Transverse colon (tissue), 4 donors: ENCODE measurements at regions of chr11 and their contacts with region 1.

Region 1: GRCh38 chr11:111422494-111423249 is 43.6 kb upstream of the POU2AF1 start:
- DNase-seq: peak; percentile 77
- H3K4me3 ChIP-seq: no peak overlapping the region
- H3K27ac ChIP-seq: peak overlapping the region in 1 of 4 donors; percentile 3
- H3K4me1 ChIP-seq: peaks cover 0 to 37% (median 9%) of the 10 kb centered on the region in 4 donors
- H3K27me3 ChIP-seq: no peaks in the 10 kb centered on the region
- CTCF ChIP-seq: peak; percentile 62 to 75 (median 71)
- EP300 ChIP-seq: no peak
- POLR2A ChIP-seq: no peak

Region 2: DNA sequence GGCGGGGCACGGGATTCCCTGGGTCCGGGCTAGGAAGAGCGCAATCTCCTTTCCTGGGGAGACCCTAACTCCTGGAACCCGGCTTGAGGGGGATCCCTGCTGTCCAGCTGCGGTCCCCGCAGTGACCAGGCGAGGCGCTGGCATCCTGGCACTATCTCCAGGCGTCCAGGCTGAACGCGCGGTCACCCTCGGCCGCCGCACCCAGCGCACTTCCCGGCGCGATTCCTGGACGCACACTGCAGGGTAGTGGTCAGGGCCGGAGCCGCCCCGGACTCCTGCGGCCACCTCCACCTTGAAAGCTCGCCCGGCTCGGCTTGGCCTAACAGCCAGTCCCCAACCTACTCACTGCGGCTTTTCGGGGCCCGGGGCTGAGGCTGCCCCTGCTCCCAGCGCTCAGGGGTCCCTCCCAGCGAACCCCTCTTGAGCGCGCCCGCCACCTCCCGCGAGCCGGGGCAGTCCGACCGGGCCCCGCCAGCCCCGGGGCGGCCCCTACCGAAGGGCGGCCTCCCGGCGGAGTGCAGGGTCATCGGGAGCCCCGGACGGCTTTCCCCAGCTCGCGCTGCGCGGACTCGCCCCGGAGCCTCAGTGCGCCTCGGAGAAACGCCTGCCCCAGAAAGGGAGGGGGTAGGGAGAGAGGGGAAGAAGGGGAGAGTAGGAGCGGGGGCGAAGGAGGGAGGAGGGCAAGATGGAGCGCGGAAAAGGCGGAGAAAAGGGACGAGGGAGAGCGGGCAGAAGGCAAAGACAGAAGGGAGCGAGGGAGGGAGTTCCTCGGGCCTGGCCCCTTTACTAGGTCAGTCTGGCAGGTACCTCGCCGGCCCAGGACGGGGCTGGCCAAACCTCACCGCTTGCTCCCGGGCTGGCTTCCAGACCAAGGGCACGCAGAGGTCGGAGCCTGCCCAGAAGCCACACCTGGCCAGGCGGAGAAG is 123.3 kb before region 1 on chr11:
- in situ Hi-C with region 1: no loop called
- intact Hi-C with region 1: loop called (anchors 5 kb)
- DNase-seq: peak; percentile 73
- H3K4me3 ChIP-seq: peak overlapping the region; percentile 61 to 72 (median 66)
- H3K27ac ChIP-seq: peak overlapping the region; percentile 86 to 91 (median 89)
- H3K4me1 ChIP-seq: peaks cover 15 to 42% (median 31%) of the 10 kb centered on the region in 4 donors
- H3K27me3 ChIP-seq: no peaks in the 10 kb centered on the region
- CTCF ChIP-seq: peak; percentile 52 to 81 (median 59)
- EP300 ChIP-seq: no peak
- POLR2A ChIP-seq: peak; percentile 67

Region 3: GRCh38 chr11:111512296-111513239 is 89.9 kb after region 1 on chr11 and contains the start of gene BTG4:
- in situ Hi-C with region 1: no loop called
- intact Hi-C with region 1: no loop called
- DNase-seq: peak; percentile 8
- H3K4me3 ChIP-seq: peak within 1 kb of the TSS; percentile 15 to 51 (median 28)
- H3K27ac ChIP-seq: no peak within 1 kb of the TSS
- H3K4me1 ChIP-seq: peaks cover 0 to 14% (median 11%) of the 10 kb centered on the region in 4 donors
- H3K27me3 ChIP-seq: peaks cover 44% of the 10 kb centered on the region
- CTCF ChIP-seq: no peak
- EP300 ChIP-seq: no peak
- POLR2A ChIP-seq: no peak
- total RNA-seq, gene BTG4: not detected

Region 4: DNA sequence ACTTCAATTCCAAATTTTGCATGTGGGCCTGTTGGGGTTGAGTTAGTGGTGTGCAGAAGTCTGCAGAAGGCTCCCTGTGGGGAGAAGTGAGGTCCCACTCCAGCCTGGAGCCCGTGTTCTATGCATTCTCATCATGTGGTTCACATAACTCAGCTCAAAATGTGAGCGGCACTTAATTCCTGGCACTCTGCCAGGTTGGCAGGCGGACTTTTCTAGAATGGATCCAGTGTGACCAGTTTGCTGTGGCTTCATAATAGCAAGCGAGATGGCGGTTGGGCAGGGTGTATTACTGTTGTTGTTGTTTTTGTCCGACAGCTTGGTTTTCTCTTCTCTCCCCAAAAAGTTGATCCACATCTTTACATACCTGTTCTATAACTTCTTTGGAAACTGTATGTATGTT is 1744.9 kb after region 1 on chr11:
- in situ Hi-C with region 1: no loop called
- intact Hi-C with region 1: loop called (anchors 5 kb)
- DNase-seq: no peak
- H3K4me3 ChIP-seq: no peak overlapping the region
- H3K27ac ChIP-seq: no peak overlapping the region
- H3K4me1 ChIP-seq: peaks cover 0 to 3% (median 0%) of the 10 kb centered on the region in 4 donors
- H3K27me3 ChIP-seq: no peaks in the 10 kb centered on the region
- CTCF ChIP-seq: no peak
- EP300 ChIP-seq: no peak
- POLR2A ChIP-seq: no peak